Sigmoid colon (tissue), 7 donors: ENCODE measurements at regions of chr12 and their contacts with region 1.

Region 1: GRCh38 chr12:119444456-119445044 is 110.0 kb downstream of the CCDC60 start:
- DNase-seq: no peak
- H3K4me3 ChIP-seq: no peak overlapping the region
- H3K27ac ChIP-seq: no peak overlapping the region
- H3K4me1 ChIP-seq: peaks cover 0 to 11% (median 4%) of the 10 kb centered on the region in 4 donors
- H3K27me3 ChIP-seq: no peaks in the 10 kb centered on the region
- CTCF ChIP-seq: peak in 3 of 4 experiments; percentile 35 to 63 (median 40)
- EP300 ChIP-seq: no peak
- POLR2A ChIP-seq: no peak

Region 2: DNA sequence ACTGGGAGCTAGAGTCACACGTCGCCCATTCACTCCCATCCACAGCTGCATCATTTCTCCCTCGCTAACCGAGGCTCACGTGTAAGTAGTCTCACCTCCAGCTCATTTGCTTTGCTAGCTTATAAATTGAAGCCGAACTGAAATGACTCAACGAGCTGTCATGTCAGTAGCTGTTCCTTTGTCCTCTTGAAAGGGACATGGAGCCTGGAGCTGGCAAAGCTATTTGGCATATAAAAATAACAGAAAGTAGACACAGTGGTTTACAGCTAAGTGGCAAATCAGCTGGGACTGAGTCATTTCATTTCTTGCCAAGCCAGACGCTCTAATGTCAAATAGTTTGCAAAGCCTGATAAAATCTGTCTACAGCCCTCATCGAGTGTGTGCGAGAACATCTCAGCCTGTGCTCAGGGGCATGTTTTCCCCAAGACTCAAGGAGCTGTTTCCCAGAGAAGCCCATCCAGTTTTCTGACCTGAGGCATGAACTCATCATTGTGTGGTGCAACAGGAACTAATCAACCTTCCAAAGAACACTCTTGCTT is 34.6 kb after region 1 on chr12:
- intact Hi-C with region 1: no loop called
- DNase-seq: no peak
- H3K4me3 ChIP-seq: no peak overlapping the region
- H3K27ac ChIP-seq: no peak overlapping the region
- H3K4me1 ChIP-seq: peaks cover 0 to 11% (median 2%) of the 10 kb centered on the region in 4 donors
- H3K27me3 ChIP-seq: no peaks in the 10 kb centered on the region
- CTCF ChIP-seq: no peak
- EP300 ChIP-seq: no peak
- POLR2A ChIP-seq: no peak

Region 3: DNA sequence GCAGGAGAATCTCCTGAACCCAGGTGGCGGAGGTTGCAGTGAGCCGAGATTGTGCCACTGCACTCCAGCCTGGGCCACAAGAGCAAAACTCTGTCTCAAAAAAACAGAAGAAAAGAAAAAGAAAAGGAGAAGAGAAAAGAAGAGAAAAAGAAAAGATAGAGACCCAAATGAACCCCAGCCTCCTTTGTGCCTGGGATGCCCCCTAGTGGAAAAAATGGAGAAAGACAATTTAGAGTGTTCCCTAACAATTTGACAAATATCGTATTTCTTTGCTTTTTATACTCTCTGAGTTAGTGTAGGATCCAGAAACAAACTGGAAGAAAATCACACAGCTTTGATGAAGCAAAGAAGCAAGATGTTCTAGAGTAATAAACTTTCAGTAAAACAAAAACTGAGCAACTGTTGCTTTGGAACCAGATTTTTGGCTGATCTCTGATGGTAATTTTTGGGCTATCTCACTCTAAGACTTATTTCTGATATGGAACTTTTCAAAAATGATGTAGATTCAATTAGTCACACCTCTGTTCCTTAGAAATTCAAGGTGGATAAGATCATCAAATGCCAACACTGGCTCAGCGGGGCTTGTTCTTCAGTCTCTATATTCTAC is 204.8 kb after region 1 on chr12:
- intact Hi-C with region 1: loop called (anchors 10 kb)
- DNase-seq: no peak
- H3K4me3 ChIP-seq: no peak overlapping the region
- H3K27ac ChIP-seq: no peak overlapping the region
- H3K4me1 ChIP-seq: no peaks in the 10 kb centered on the region
- H3K27me3 ChIP-seq: no peaks in the 10 kb centered on the region
- CTCF ChIP-seq: peak in 1 of 4 experiments; percentile 34
- EP300 ChIP-seq: no peak
- POLR2A ChIP-seq: no peak